ENCODE measurements at regions of chr20 and their contacts with region 1.

Region 1: DNA sequence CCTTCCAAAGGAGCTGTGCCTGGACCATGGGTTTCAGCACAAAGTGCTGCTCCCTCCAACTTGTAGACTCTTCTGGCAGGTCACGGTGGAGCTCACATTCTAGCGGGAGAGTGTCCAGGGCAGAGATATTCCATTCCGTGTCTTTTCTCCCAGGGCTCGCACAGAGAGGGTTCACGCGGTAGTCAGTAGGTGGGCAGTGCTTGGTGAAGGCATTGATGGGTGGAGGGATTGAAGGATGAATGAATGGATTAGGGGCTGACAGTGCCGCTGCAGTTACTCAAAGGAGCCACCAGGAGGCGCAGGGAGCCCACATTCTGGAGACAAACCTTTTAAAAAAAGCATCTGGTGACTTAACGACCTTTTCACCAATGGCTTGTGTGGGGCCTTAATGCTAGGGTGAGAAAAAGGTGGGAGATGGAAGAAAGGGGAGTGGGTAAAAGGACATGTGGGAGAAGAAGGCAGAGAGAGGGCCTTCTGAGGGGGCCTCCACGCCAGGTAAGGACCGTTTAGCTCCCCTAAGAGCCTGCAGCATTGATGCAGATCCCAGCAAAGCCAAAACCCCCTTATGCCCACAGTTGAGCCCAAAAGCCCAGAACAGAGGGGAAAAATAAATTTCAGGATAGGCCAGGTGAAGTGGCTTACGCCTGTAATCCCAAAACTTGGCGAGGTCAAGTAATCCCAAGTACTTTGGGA is 17.5 kb upstream of the FAM110A start:
- DNase-seq: peak; percentile 48 to 66 (median 59)
- H3K4me3 ChIP-seq: no peak overlapping the region
- H3K4me3 Mint-ChIP-seq: no peak overlapping the region
- H3K27ac ChIP-seq: no peak overlapping the region
- H3K27ac Mint-ChIP-seq: no peak overlapping the region
- H3K4me1 ChIP-seq: peaks cover 0 to 3% of the 10 kb centered on the region in 2 donors
- H3K4me1 Mint-ChIP-seq: peaks cover 9% of the 10 kb centered on the region
- H3K27me3 ChIP-seq: no peaks in the 10 kb centered on the region
- H3K27me3 Mint-ChIP-seq: peaks cover 6 to 13% (median 8%) of the 10 kb centered on the region in 3 donors
- CTCF ChIP-seq: peak; percentile 96

Region 2: DNA sequence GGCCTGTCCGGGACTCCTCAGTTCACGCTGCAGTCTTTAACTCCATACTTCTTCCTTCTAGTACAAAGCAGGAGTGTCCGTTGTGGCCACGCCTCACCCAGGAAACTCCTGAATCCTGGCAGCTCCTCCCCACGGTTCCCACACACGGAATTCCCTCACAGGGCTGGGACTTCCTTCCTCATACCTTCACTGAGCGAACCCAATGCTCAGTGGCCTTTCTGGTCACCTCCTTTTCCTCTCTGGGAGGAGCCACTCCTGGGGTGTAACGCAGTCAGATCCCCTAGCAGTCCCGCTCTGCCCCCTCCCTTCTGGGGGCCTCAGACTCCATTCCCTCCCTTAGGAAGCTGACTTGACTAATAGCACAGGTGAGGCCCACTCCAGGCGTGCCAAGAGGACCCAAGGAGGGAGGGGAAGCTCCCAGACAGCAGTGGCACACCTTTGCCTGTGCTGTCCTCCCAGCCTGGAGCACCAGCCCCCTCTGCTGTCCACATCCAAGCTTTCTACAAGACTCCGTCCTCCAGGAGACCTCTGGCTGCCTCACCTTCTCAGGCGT is 47.6 kb before region 1 on chr20 and contains the start of gene SLC52A3:
- intact Hi-C with region 1: no loop called
- DNase-seq: no peak
- H3K4me3 ChIP-seq: no peak within 1 kb of the TSS
- H3K4me3 Mint-ChIP-seq: peak within 1 kb of the TSS in 1 of 2 donors; percentile 64
- H3K27ac ChIP-seq: no peak within 1 kb of the TSS
- H3K27ac Mint-ChIP-seq: peak within 1 kb of the TSS in 1 of 7 donors; percentile 4
- H3K4me1 ChIP-seq: no peaks in the 10 kb centered on the region
- H3K4me1 Mint-ChIP-seq: no peaks in the 10 kb centered on the region
- H3K27me3 ChIP-seq: no peaks in the 10 kb centered on the region
- H3K27me3 Mint-ChIP-seq: peaks cover 3 to 19% (median 5%) of the 10 kb centered on the region in 3 donors
- CTCF ChIP-seq: no peak
- polyA plus RNA-seq, gene SLC52A3: not detected

Region 3: DNA sequence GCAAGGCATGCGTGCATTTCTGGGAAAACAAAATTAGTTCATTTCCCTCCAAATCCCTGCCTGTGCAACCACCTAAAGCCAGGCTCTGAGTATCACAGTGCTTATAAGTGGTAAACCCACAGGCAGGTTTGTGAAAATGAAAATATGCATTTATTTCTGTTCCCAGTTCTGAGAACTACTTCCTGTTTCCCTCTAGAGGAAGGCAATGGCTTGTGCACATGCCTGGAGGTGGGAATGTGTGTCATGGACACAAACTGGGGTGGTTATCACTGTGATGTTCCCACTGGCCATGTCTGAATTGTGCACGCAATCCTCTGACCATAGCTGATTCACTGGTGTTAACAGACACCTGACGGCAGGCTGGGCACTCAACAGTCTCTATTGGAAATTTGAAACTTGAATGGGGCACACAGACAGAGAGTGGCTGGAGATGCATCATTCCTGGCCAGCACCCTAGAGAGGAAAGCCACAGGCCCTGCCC is 43.7 kb after region 1 on chr20:
- intact Hi-C with region 1: loop called in 1 of 2 experiments (anchors 5 kb)
- DNase-seq: no peak
- H3K4me3 ChIP-seq: no peak overlapping the region
- H3K4me3 Mint-ChIP-seq: no peak overlapping the region
- H3K27ac ChIP-seq: no peak overlapping the region
- H3K27ac Mint-ChIP-seq: peak overlapping the region in 2 of 7 donors; percentile 28 to 37
- H3K4me1 ChIP-seq: peaks cover 17 to 30% of the 10 kb centered on the region in 2 donors
- H3K4me1 Mint-ChIP-seq: peaks cover 33% of the 10 kb centered on the region
- H3K27me3 ChIP-seq: no peaks in the 10 kb centered on the region
- H3K27me3 Mint-ChIP-seq: peaks cover 0 to 3% (median 0%) of the 10 kb centered on the region in 3 donors
- CTCF ChIP-seq: no peak

Region 4: DNA sequence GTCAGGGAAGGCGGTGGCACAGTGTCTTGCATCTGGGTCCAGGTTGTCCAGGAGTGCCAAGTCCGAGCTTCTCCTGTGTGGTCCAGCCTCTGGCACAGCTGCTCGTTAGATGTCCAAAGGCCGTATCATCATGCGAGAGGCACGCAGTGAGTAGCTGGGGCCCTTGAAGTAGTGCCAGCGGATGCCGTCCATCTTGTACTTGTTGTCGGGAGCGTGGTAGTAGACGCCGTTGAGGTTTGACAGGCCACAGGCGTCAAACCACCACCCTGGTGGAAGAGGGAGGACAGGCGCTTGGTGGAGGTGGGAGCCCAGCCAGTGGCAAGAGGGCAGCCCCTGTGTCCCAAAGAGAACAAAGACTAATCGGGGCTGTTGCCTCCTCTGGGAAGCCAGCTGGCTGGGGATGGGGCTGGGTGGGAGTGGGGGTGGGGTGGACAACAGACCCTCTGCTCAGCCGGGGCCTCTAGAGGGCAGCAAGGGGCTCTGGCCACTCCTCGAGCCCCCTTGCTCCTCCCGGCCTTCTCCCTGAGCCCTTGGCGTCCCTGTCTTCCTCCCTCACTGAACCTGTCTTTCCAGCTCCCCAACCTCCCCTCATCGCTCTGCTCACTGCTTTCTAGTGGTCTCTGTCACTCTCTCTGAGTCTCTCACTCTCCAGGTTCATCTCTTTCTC is 56.9 kb after region 1 on chr20:
- intact Hi-C with region 1: no loop called
- DNase-seq: no peak
- H3K4me3 ChIP-seq: no peak overlapping the region
- H3K4me3 Mint-ChIP-seq: no peak overlapping the region
- H3K27ac ChIP-seq: no peak overlapping the region
- H3K27ac Mint-ChIP-seq: no peak overlapping the region
- H3K4me1 ChIP-seq: no peaks in the 10 kb centered on the region
- H3K4me1 Mint-ChIP-seq: no peaks in the 10 kb centered on the region
- H3K27me3 ChIP-seq: no peaks in the 10 kb centered on the region
- H3K27me3 Mint-ChIP-seq: peaks cover 4 to 13% (median 10%) of the 10 kb centered on the region in 3 donors
- CTCF ChIP-seq: no peak

Region 5: GRCh38 chr20:884983-885952 is 69.2 kb after region 1 on chr20:
- intact Hi-C with region 1: loop called in 1 of 2 experiments (anchors 5 kb)
- DNase-seq: peak; percentile 30 to 37 (median 36)
- H3K4me3 ChIP-seq: no peak overlapping the region
- H3K4me3 Mint-ChIP-seq: peak overlapping the region in 1 of 2 donors; percentile 67
- H3K27ac ChIP-seq: no peak overlapping the region
- H3K27ac Mint-ChIP-seq: no peak overlapping the region
- H3K4me1 ChIP-seq: peaks cover 44 to 59% of the 10 kb centered on the region in 2 donors
- H3K4me1 Mint-ChIP-seq: peaks cover 64% of the 10 kb centered on the region
- H3K27me3 ChIP-seq: peaks cover 0 to 32% of the 10 kb centered on the region in 2 donors
- H3K27me3 Mint-ChIP-seq: peaks cover 24 to 32% (median 28%) of the 10 kb centered on the region in 3 donors
- CTCF ChIP-seq: peak; percentile 25

Region 6: DNA sequence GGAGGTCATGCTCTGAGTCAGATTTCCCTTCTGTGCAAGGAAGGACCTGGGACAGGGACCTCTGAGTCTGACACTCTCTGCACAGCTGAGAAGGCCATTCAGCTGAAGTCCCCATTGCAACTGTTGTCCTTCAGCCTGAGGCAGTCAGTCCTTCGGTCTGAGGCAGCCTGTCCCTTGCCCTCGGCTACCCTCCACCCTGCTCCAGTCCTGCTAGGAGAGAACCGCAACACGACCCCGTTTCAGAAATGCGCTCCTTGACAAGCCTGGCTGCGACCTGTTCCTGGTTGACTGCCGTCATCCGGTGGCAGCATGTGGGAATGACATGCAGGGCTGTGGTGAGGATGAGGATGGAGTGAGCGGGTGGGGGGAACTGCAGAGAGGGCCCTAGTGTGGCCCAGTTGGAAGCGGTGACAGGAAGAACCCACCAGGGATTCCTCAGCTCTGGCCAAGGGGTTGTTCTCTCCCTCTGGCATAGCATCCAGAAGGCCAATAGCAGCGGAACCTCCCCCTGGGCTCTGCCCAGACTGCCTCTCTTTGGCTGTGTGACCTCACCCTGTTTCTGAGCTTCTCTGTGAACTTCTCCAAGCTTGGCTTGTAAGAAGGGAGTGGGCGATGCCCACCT is 140.4 kb after region 1 on chr20:
- intact Hi-C with region 1: loop called (anchors 1 kb)
- DNase-seq: peak; percentile 36 to 71 (median 58)
- H3K4me3 ChIP-seq: no peak overlapping the region
- H3K4me3 Mint-ChIP-seq: peak overlapping the region in 1 of 2 donors; percentile 42
- H3K27ac ChIP-seq: no peak overlapping the region
- H3K27ac Mint-ChIP-seq: no peak overlapping the region
- H3K4me1 ChIP-seq: peaks cover 0 to 2% of the 10 kb centered on the region in 2 donors
- H3K4me1 Mint-ChIP-seq: peaks cover 5% of the 10 kb centered on the region
- H3K27me3 ChIP-seq: peaks cover 0 to 8% of the 10 kb centered on the region in 2 donors
- H3K27me3 Mint-ChIP-seq: peaks cover 23 to 41% (median 39%) of the 10 kb centered on the region in 3 donors
- CTCF ChIP-seq: peak; percentile 99

Region 7: GRCh38 chr20:1108437-1108920 is 292.4 kb after region 1 on chr20:
- intact Hi-C with region 1: loop called (anchors 2 to 5 kb)
- DNase-seq: peak; percentile 25 to 48 (median 43)
- H3K4me3 ChIP-seq: no peak overlapping the region
- H3K4me3 Mint-ChIP-seq: no peak overlapping the region
- H3K27ac ChIP-seq: no peak overlapping the region
- H3K27ac Mint-ChIP-seq: no peak overlapping the region
- H3K4me1 ChIP-seq: no peaks in the 10 kb centered on the region
- H3K4me1 Mint-ChIP-seq: peaks cover 4% of the 10 kb centered on the region
- H3K27me3 ChIP-seq: no peaks in the 10 kb centered on the region
- H3K27me3 Mint-ChIP-seq: peaks cover 0 to 2% (median 1%) of the 10 kb centered on the region in 3 donors
- CTCF ChIP-seq: peak; percentile 84

Region 8: GRCh38 chr20:1144401-1145172 is 328.5 kb after region 1 on chr20:
- intact Hi-C with region 1: no loop called
- DNase-seq: no peak
- H3K4me3 ChIP-seq: no peak overlapping the region
- H3K4me3 Mint-ChIP-seq: no peak overlapping the region
- H3K27ac ChIP-seq: no peak overlapping the region
- H3K27ac Mint-ChIP-seq: peak overlapping the region in 1 of 7 donors; percentile 42
- H3K4me1 ChIP-seq: no peaks in the 10 kb centered on the region
- H3K4me1 Mint-ChIP-seq: no peaks in the 10 kb centered on the region
- H3K27me3 ChIP-seq: no peaks in the 10 kb centered on the region
- H3K27me3 Mint-ChIP-seq: peaks cover 0 to 3% (median 0%) of the 10 kb centered on the region in 3 donors
- CTCF ChIP-seq: no peak

Region 9: GRCh38 chr20:1212607-1213396 is 396.7 kb after region 1 on chr20:
- intact Hi-C with region 1: loop called in 1 of 2 experiments (anchors 5 kb)
- DNase-seq: peak; percentile 37 to 56 (median 56)
- H3K4me3 ChIP-seq: no peak overlapping the region
- H3K4me3 Mint-ChIP-seq: peak overlapping the region in 1 of 2 donors; percentile 66
- H3K27ac ChIP-seq: no peak overlapping the region
- H3K27ac Mint-ChIP-seq: no peak overlapping the region
- H3K4me1 ChIP-seq: no peaks in the 10 kb centered on the region
- H3K4me1 Mint-ChIP-seq: peaks cover 3% of the 10 kb centered on the region
- H3K27me3 ChIP-seq: peaks cover 0 to 5% of the 10 kb centered on the region in 2 donors
- H3K27me3 Mint-ChIP-seq: peaks cover 5 to 19% (median 8%) of the 10 kb centered on the region in 3 donors
- CTCF ChIP-seq: peak; percentile 89

Measured in CD14-positive monocyte (primary cell).